HCT116 (cell line): ENCODE measurements at regions of chr13 and their contacts with region 1.

Region 1: GRCh38 chr13:21297914-21298831 is 121.7 kb downstream of the MRPL57 start:
- DNase-seq: peak; percentile 86
- ATAC-seq: peak; percentile 93
- H3K4me3 ChIP-seq: peak overlapping the region; percentile 88 to 90
- H3K27ac ChIP-seq: peak overlapping the region; percentile 71
- H3K4me1 ChIP-seq: peaks cover 16 to 23% of the 10 kb centered on the region in 2 experiments
- H3K27me3 ChIP-seq: no peaks in the 10 kb centered on the region
- CTCF ChIP-seq: peak; percentile 61 to 85 (median 76); a peak in 5 of 6 replicates
- POLR2A ChIP-seq: peak; percentile 36
- RAD21 ChIP-seq: 0 out of 2 replicates have a peak, but pooled peaks have one; percentile 25

Region 2: DNA sequence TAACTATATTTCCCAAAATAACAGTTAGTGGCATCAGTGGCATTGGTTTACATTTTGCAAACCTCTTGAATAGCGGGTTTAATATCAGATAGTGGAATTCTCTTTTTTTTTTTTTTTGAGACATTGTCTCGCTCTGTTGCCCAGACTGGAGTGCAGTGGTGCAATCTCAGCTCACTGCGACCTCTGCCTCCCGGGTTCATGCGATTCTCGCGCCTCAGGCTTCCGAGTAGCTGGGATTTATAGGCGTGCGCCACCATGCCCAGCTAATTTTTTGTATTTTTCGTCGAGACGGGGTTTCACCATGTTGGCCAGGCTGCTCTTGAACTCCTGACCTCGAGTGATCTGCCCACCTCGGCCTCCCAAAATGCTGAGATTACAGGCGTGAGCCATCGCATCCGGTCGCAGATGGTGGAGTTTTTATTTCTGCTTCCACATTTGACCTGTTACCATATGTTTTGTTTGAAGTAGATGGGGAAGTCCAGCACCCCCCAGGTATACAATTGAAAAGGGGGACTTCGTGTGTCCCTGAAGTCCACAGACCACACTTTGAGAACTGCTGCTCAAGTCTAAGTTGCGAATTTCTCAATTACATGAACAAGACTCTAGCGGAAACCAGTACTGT is 355.1 kb before region 1 on chr13:
- CTCF ChIA-PET with region 1: interaction called, 7 read pairs
- POLR2A ChIA-PET with region 1: no interaction called
- RAD21 ChIA-PET with region 1: no interaction called
- intact Hi-C with region 1: loop called (anchors 2 kb)
- DNase-seq: no peak
- ATAC-seq: no peak
- H3K4me3 ChIP-seq: no peak overlapping the region
- H3K27ac ChIP-seq: no peak overlapping the region
- H3K4me1 ChIP-seq: peaks cover 0 to 8% of the 10 kb centered on the region in 2 experiments; a peak in 2 of 4 replicates
- H3K27me3 ChIP-seq: no peaks in the 10 kb centered on the region
- CTCF ChIP-seq: no peak
- POLR2A ChIP-seq: no peak
- RAD21 ChIP-seq: no peak

Region 3: DNA sequence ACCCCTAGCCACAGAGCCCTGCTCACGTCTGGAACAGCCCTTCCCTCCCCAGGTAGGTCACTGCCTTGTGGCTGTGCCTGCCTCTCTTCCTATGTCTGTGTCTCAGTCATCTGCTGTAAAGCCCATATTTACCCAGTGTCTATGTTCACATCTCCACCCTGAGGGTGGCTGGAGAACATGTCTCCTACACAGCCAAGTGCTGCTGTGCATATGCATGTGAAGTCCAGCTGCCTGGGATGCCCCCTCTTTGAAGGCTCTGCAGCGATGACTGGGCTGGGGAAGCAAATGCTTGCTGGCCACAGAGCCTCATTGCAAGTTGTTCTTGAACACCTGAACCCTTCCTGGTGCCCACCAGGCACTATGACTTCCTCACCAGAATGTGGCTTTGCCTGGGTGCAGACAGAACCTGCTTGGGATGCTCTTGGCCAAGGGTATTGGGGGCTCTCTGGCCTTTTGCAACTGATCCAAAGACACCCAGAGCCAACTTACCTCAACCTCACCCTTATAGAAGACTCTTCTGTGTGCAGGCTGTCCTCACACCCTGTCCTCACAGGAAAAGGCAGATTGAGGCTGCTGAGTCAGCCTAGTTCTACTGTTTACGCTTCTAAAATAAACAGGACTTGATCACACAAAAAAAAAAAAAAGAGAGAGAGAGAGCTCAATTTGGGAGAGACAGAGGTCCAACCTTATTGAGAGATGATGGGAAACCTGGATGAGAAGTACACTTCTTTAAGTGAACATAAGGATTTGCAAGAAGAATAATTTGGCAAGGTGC is 95.2 kb before region 1 on chr13:
- CTCF ChIA-PET with region 1: no interaction called
- POLR2A ChIA-PET with region 1: no interaction called
- RAD21 ChIA-PET with region 1: no interaction called
- intact Hi-C with region 1: no loop called
- DNase-seq: no peak
- ATAC-seq: no peak
- H3K4me3 ChIP-seq: no peak overlapping the region
- H3K27ac ChIP-seq: no peak overlapping the region
- H3K4me1 ChIP-seq: no peaks in the 10 kb centered on the region
- H3K27me3 ChIP-seq: no peaks in the 10 kb centered on the region
- CTCF ChIP-seq: no peak
- POLR2A ChIP-seq: no peak
- RAD21 ChIP-seq: no peak

Region 4: DNA sequence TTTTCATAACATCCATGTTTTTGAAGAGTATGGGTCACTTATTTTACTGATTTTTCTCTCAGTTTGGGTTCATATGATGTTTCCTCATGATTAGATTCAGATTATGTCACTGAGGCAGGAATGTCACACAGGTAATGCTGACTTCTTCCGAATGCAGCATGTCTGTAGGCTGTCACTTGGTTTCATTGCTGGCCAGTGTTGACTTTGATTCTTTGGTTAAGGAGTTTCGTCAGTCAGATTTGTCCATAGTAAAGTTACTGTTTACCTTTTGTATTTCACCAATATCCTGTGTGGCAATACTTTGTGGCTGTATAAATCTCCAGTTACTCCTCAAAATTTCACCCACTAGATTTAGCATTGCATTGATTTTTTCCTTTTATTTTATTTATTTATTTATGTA is 16.1 kb before region 1 on chr13:
- CTCF ChIA-PET with region 1: interaction called, 10 read pairs
- POLR2A ChIA-PET with region 1: no interaction called
- RAD21 ChIA-PET with region 1: no interaction called
- intact Hi-C with region 1: no loop called
- DNase-seq: no peak
- ATAC-seq: no peak
- H3K4me3 ChIP-seq: no peak overlapping the region
- H3K27ac ChIP-seq: no peak overlapping the region
- H3K4me1 ChIP-seq: no peaks in the 10 kb centered on the region
- H3K27me3 ChIP-seq: no peaks in the 10 kb centered on the region
- CTCF ChIP-seq: no peak
- POLR2A ChIP-seq: no peak
- RAD21 ChIP-seq: no peak

Region 5: DNA sequence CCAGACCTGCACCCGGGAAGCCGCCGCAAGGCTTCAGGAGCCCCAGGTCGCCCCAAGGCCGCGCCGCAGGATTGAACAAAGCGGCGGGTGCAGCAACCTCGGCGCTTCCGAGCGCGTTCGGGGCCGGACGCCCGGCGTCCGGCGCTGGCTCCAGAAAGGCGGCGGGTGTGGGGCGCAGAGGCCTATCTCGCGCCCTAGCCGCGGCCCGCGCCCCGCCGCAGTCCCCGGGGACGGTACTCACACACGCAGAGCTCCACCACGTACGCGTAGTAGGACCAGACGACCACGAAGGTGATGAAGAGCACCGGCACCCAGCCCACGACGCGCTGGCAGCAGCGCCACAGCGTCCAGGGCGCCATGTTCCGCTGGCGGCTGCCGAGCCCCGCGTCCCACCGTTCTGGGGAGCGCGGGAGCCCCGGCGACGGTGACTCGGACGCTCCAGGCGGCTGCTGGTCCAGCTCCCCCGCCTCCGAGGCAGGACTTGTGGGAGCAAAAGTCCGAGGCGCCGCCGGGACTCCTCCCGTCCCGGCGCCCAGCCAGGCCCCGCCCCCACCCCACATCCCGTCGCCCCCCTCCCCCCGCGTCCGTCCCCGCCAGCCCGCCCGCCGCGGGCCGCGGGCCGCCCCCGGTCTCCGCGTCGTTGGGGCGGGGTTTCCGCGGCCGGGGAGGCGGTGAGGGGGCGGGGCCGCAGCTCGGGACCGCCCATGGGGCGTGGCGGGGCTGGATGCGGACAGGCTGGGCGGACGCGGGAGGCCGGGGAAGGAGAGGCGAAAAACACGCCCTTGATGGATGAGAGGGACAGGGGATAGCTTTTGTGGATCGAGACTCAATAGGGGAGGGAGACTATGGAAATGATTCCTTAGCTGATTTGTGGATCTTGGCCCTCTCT is 160.9 kb after region 1 on chr13 and contains the start of gene ZDHHC20:
- CTCF ChIA-PET with region 1: interaction called, 6 read pairs
- POLR2A ChIA-PET with region 1: no interaction called
- RAD21 ChIA-PET with region 1: no interaction called
- intact Hi-C with region 1: loop called (anchors 5 kb)
- DNase-seq: no peak
- ATAC-seq: peak; percentile 93
- H3K4me3 ChIP-seq: peak within 1 kb of the TSS; percentile 83 to 94
- H3K27ac ChIP-seq: peak within 1 kb of the TSS; percentile 99
- H3K4me1 ChIP-seq: peaks cover 6 to 13% of the 10 kb centered on the region in 2 experiments; a peak in 3 of 4 replicates
- H3K27me3 ChIP-seq: no peaks in the 10 kb centered on the region
- CTCF ChIP-seq: no peak
- POLR2A ChIP-seq: peak; percentile 32
- RAD21 ChIP-seq: no peak
- total RNA-seq, gene ZDHHC20: 110 TPM

Region 6: GRCh38 chr13:21603531-21604448 is 305.6 kb after region 1 on chr13 and contains the start of gene MICU2:
- CTCF ChIA-PET with region 1: no interaction called
- POLR2A ChIA-PET with region 1: no interaction called
- RAD21 ChIA-PET with region 1: no interaction called
- intact Hi-C with region 1: loop called (anchors 5 kb)
- DNase-seq: peak; percentile 90
- ATAC-seq: peak; percentile 98
- H3K4me3 ChIP-seq: peak within 1 kb of the TSS; percentile 71 to 86
- H3K27ac ChIP-seq: peak within 1 kb of the TSS; percentile 86
- H3K4me1 ChIP-seq: peaks cover 7 to 12% of the 10 kb centered on the region in 2 experiments; a peak in 3 of 4 replicates
- H3K27me3 ChIP-seq: no peaks in the 10 kb centered on the region
- CTCF ChIP-seq: no peak
- POLR2A ChIP-seq: peak; percentile 88
- RAD21 ChIP-seq: no peak
- total RNA-seq, gene MICU2: 41.0 TPM

Region 7: GRCh38 chr13:22187329-22187728 is 889.2 kb after region 1 on chr13:
- CTCF ChIA-PET with region 1: no interaction called
- POLR2A ChIA-PET with region 1: no interaction called
- RAD21 ChIA-PET with region 1: no interaction called
- intact Hi-C with region 1: no loop called
- DNase-seq: no peak
- ATAC-seq: no peak
- H3K4me3 ChIP-seq: no peak overlapping the region
- H3K27ac ChIP-seq: no peak overlapping the region
- H3K4me1 ChIP-seq: no peaks in the 10 kb centered on the region
- H3K27me3 ChIP-seq: no peaks in the 10 kb centered on the region
- CTCF ChIP-seq: no peak
- POLR2A ChIP-seq: no peak
- RAD21 ChIP-seq: no peak